IMR-90 (cell line): ENCODE measurements at regions of chr5 and their contacts with region 1.

Region 1: DNA sequence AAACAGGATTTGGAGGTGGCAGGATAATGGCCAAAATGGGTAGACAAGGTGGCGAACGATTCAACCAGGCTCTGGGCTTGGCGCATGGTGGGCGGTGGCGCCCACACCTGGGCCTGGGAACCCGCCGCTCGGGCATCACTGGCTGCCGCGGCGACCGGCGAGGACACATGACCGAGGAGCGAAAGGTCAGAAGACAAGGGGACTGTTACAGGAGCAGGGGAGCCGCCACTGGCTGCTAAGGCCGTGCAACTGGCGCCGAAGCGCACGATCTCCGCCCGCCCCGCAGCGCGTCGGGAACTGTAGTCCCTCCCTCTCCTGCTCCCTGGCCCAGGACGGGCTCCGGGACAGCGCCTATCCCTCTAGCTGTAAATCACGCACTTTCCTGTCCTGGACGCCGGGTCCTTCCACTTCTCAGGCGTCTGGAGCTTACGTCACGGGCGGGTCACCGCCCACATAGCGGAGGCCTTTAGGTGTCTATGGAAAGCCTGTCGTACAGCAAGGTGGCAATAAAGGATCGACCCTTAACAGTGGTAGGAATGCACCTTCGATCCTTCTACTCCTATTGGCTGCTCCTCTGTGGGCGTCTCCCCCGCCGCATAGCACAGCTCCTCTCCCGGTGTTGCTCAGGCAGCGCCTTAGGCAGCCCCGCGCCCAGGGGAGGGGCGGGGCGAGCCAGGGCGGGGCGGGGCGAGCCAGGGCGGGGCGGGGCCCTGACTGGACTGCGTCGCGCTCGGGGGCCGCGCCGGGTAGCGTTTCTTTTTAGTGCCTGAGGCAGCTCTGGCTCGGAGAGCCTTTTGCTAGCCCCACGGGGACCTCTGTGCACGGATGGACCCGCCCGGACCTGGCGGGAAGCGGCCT is at the start of gene ICE1:
- DNase-seq: peak; percentile 97
- ATAC-seq: peak; percentile 93
- H3K4me3 ChIP-seq: peak within 1 kb of the TSS; percentile 59
- H3K27ac ChIP-seq: peak within 1 kb of the TSS; percentile 96
- H3K4me1 ChIP-seq: peaks cover 7% of the 10 kb centered on the region
- H3K27me3 ChIP-seq: no peaks in the 10 kb centered on the region
- CTCF ChIP-seq: no peak
- POLR2A ChIP-seq: peak; percentile 77; the same call in 1 of the 2 replicates
- RAD21 ChIP-seq: no peak
- total RNA-seq, gene ICE1: 18.5 and 26.7 TPM in 2 replicates

Region 2: GRCh38 chr5:4868109-4868735 is 554.0 kb before region 1 on chr5:
- CTCF ChIA-PET with region 1: no interaction called
- POLR2A ChIA-PET with region 1: no interaction called
- dilution Hi-C with region 1: no loop called
- in situ Hi-C with region 1: loop called (anchors 10 kb)
- intact Hi-C with region 1: loop called (anchors 1 kb)
- DNase-seq: no peak
- ATAC-seq: no peak
- H3K4me3 ChIP-seq: no peak overlapping the region
- H3K27ac ChIP-seq: no peak overlapping the region
- H3K4me1 ChIP-seq: no peaks in the 10 kb centered on the region
- H3K27me3 ChIP-seq: no peaks in the 10 kb centered on the region
- CTCF ChIP-seq: peak; percentile 27
- POLR2A ChIP-seq: no peak
- RAD21 ChIP-seq: no peak; the same call in 1 of the 2 replicates

Region 3: DNA sequence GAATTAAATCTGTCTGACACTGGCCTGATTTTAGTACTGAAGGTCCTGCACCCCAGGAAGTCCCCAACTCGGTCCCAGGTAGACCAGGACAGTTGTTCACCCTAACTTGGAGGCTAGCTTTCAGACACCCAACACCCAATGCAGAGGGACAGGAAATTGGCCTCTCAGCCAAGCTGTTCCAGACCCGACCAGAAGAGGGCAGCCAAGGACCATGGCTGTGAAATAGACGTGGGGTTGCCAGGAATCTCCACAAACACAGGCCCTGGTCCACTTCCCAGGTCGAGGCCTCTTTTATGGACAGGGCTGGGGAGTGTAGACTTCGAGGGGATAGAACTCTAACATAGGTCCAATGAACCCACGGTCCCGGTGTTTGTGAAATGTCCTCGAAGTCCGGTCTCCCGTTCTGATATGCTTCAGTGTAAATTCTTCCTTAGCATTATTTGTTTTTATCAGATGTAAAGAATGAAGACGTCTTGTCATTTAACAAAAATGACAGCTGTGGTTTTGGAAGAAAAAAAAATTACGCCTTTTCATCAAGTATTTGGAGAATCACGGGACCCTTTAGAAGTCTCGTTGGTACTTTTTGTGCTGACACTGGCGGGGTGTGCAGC is 542.4 kb before region 1 on chr5:
- CTCF ChIA-PET with region 1: interaction called, 3 read pairs
- POLR2A ChIA-PET with region 1: no interaction called
- dilution Hi-C with region 1: no loop called
- in situ Hi-C with region 1: loop called (anchors 10 kb)
- intact Hi-C with region 1: loop called (anchors 1 kb)
- DNase-seq: peak; percentile 47
- ATAC-seq: peak; percentile 60
- H3K4me3 ChIP-seq: no peak overlapping the region
- H3K27ac ChIP-seq: no peak overlapping the region
- H3K4me1 ChIP-seq: no peaks in the 10 kb centered on the region
- H3K27me3 ChIP-seq: no peaks in the 10 kb centered on the region
- CTCF ChIP-seq: peak; percentile 77
- POLR2A ChIP-seq: no peak
- RAD21 ChIP-seq: peak; percentile 74

Region 4: DNA sequence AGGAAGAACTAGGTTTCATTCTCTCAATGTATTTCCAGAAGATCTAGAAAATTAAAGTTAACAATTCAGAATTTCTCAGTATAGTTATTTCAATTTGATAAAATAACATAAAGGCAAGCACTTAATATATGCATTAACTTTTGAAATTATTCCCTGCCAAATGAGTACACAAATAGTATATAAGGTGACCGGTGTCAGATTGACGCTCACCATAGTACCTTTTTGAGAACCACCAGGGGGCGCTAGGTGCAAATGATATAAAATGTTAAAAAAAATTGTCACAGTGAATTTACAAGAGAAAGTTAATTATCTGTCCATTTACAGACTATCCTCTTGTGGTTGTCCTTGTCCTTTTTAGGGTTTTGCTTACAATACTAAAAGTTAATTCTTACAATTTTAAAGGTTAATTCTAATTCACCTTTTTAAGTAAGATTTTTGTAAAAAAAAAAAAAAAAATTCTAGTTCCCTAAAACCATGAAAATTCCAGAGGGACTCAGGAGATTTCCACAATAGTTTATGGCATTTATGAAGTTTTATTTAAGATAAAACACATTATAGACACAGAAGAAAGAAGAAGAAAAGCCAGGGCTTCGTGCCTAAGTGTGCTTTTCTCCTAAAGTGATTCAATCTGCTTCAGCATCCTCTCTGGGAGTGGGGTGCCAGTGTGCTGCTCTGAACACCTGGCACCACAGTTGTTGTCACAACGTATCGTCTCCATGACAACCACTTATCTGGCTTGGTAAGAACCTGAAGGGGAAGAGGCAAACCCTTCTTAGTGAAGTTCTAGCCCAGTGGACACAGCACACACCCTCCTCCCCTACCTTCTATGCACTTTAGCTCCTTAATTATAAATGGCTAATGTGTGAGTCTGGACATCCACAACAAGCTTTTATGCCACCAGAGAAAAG is 280.3 kb before region 1 on chr5:
- CTCF ChIA-PET with region 1: interaction called, 12 read pairs
- POLR2A ChIA-PET with region 1: no interaction called
- dilution Hi-C with region 1: no loop called
- in situ Hi-C with region 1: loop called (anchors 5 kb)
- intact Hi-C with region 1: loop called (anchors 1 kb)
- DNase-seq: peak; percentile 51
- ATAC-seq: peak; percentile 61; the same call in 1 of the 2 replicates
- H3K4me3 ChIP-seq: no peak overlapping the region
- H3K27ac ChIP-seq: no peak overlapping the region
- H3K4me1 ChIP-seq: no peaks in the 10 kb centered on the region
- H3K27me3 ChIP-seq: peaks cover 14% of the 10 kb centered on the region
- CTCF ChIP-seq: peak; percentile 62
- POLR2A ChIP-seq: no peak
- RAD21 ChIP-seq: peak; percentile 67